Naive thymus-derived CD4-positive, alpha-beta T cell (primary cell): ENCODE measurements at regions of chr16 and their contacts with region 1.

Region 1: DNA sequence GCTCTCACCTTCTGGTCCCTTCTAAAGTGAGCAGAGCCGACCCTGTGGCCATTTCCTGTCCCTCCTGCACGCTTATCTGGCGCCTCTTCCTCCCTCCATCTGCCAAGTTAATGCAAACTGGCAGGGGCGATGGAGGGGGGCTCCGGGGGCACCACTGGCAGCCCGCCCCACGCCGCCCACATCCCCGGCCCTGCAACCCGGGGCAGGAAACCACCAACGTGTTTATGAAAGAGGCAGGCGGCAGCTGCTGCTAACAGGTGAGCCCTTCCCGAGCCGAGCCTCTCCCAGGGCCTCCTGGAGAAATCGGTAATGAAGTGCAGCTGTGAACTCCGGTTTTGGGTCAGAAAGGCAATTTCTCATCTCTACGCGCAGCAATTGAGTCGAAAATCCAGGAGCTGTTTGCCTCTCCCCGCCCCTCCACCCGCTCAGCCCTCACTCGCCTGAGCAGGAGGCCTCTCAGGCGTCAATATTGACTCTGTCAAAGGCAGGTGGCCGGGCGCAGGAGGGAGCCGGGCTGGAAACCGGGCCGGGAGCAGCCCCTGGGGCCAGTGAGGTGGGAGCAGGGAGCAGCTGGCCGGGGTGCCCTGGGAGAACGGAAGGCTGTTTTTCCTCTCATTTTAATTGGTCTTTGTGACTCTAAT is 164.4 kb upstream of the GSE1 start:
- DNase-seq: peak in 8 of 9 donors; percentile 36 to 76 (median 72)
- ATAC-seq: peak; percentile 82
- H3K4me3 ChIP-seq: peak overlapping the region; percentile 24
- H3K4me3 Mint-ChIP-seq: peak overlapping the region in 9 of 10 donors; percentile 60 to 82 (median 73)
- H3K27ac ChIP-seq: peak overlapping the region; percentile 58
- H3K27ac Mint-ChIP-seq: peak overlapping the region in 8 of 9 donors; percentile 83 to 97 (median 91)
- H3K4me1 ChIP-seq: peaks cover 31 to 57% of the 10 kb centered on the region in 2 donors
- H3K4me1 Mint-ChIP-seq: peaks cover 3 to 73% (median 48%) of the 10 kb centered on the region in 7 donors
- H3K27me3 ChIP-seq: no peaks in the 10 kb centered on the region
- H3K27me3 Mint-ChIP-seq: peaks cover 0 to 2% (median 0%) of the 10 kb centered on the region in 5 donors

Region 2: DNA sequence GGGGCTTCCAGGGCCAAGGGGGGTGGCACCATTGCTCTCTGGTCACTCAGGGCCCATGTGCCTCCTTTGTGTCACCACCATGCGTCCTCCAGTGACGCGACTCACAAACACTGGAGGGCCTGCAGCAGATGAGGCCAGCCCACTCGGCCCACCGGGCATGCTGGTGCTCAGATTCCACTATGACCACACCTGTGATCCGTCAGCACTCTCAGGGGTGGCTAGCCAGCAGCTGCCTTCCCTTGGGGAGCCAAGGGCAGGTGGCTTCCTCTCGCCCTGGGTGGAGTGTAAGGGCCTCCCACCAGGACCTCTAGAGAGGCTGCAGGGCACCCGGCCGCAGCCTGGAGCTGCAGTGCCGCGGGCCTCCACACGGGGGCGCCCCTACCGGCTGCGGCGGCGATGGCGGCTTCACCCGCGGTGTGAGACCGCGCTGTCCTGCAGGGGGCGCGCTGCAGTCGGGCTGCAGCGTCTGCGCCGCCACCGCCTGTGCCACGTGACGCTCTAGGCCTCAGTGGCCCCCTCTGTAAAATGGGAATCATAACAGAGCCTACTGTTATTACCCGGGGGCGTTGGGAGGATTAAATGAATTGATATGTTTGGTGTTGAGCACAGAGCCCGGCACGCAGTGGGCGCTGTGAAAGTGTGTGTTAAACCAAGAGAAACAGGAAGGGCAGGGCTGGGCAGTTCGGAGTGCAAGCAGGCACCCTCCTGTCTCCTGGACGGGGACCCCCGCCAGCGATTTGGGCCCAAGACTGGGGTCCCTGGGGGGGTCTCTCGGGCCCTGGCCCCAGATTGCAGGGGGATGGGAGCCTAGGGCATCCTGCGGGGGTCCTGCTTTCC is 28.0 kb before region 1 on chr16:
- CTCF ChIA-PET with region 1: interaction called, 11 read pairs
- POLR2A ChIA-PET with region 1: interaction called, 3 read pairs
- intact Hi-C with region 1: loop called in 1 of 2 experiments (anchors 1 kb)
- DNase-seq: peak; percentile 29 to 90 (median 71)
- ATAC-seq: peak; percentile 95
- H3K4me3 ChIP-seq: no peak overlapping the region
- H3K4me3 Mint-ChIP-seq: no peak overlapping the region
- H3K27ac ChIP-seq: no peak overlapping the region
- H3K27ac Mint-ChIP-seq: no peak overlapping the region
- H3K4me1 ChIP-seq: peaks cover 0 to 10% of the 10 kb centered on the region in 2 donors
- H3K4me1 Mint-ChIP-seq: peaks cover 0 to 10% (median 0%) of the 10 kb centered on the region in 7 donors
- H3K27me3 ChIP-seq: no peaks in the 10 kb centered on the region
- H3K27me3 Mint-ChIP-seq: peaks cover 0 to 4% (median 0%) of the 10 kb centered on the region in 5 donors

Region 3: GRCh38 chr16:85461814-85462713 is 13.4 kb after region 1 on chr16:
- CTCF ChIA-PET with region 1: interaction called, 4 read pairs
- POLR2A ChIA-PET with region 1: interaction called, 29 read pairs
- intact Hi-C with region 1: loop called in 1 of 2 experiments (anchors 1 kb)
- DNase-seq: no peak
- ATAC-seq: peak; percentile 65
- H3K4me3 ChIP-seq: peak overlapping the region; percentile 50
- H3K4me3 Mint-ChIP-seq: peak overlapping the region; percentile 47 to 93 (median 87)
- H3K27ac ChIP-seq: no peak overlapping the region
- H3K27ac Mint-ChIP-seq: peak overlapping the region in 1 of 9 donors; percentile 58
- H3K4me1 ChIP-seq: peaks cover 0 to 11% of the 10 kb centered on the region in 2 donors
- H3K4me1 Mint-ChIP-seq: peaks cover 3 to 15% (median 9%) of the 10 kb centered on the region in 7 donors
- H3K27me3 ChIP-seq: peaks cover 0 to 3% of the 10 kb centered on the region in 2 donors
- H3K27me3 Mint-ChIP-seq: peaks cover 14 to 41% (median 19%) of the 10 kb centered on the region in 5 donors

Region 4: DNA sequence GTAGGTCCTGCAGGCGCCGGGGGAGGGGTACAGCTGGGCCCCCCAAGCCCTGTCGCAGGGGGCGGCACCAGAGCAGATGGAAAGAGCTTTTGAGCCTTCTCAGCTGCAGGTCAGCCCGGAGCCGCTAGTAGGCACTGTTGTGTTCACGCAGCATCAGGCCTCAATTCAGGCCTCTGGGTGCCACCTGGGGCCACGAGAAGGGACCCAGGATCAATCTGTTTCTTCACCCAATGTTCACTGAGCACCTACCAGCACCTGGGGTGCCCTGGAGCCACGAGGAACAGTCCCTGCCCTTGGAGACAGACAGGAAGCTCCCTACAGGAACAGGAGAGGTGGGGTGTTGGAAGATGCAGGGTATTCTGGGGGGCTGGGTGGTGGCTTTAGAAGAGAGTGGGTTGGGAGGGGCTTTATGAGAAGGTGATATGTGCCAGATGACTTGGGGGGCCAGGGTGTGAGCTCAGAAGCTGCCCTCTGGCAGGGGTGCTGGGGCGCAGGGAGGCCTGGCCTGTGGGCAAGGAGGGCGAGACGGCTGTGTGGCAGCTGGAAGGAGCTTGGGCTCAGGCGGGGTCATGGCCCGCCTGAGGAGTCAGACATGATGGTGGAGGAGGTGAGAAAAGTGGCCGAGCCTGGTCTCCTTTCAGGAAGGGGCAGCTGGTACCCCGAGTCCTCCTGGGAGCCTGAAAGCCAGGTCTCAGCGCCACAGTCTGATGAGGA is 42.5 kb after region 1 on chr16:
- CTCF ChIA-PET with region 1: interaction called, 4 read pairs
- POLR2A ChIA-PET with region 1: interaction called, 3 read pairs
- intact Hi-C with region 1: loop called in 1 of 2 experiments (anchors 5 kb)
- DNase-seq: peak in 3 of 9 donors; percentile 17 to 28 (median 27)
- ATAC-seq: peak; percentile 69
- H3K4me3 ChIP-seq: no peak overlapping the region
- H3K4me3 Mint-ChIP-seq: peak overlapping the region in 1 of 10 donors; percentile 52
- H3K27ac ChIP-seq: no peak overlapping the region
- H3K27ac Mint-ChIP-seq: peak overlapping the region in 1 of 9 donors; percentile 46
- H3K4me1 ChIP-seq: no peaks in the 10 kb centered on the region
- H3K4me1 Mint-ChIP-seq: peaks cover 4 to 16% (median 8%) of the 10 kb centered on the region in 7 donors
- H3K27me3 ChIP-seq: no peaks in the 10 kb centered on the region
- H3K27me3 Mint-ChIP-seq: no peaks in the 10 kb centered on the region

Region 5: GRCh38 chr16:85503679-85504231 is 55.1 kb after region 1 on chr16:
- CTCF ChIA-PET with region 1: no interaction called
- POLR2A ChIA-PET with region 1: no interaction called
- intact Hi-C with region 1: no loop called
- DNase-seq: no peak
- ATAC-seq: no peak
- H3K4me3 ChIP-seq: no peak overlapping the region
- H3K4me3 Mint-ChIP-seq: no peak overlapping the region
- H3K27ac ChIP-seq: no peak overlapping the region
- H3K27ac Mint-ChIP-seq: no peak overlapping the region
- H3K4me1 ChIP-seq: no peaks in the 10 kb centered on the region
- H3K4me1 Mint-ChIP-seq: no peaks in the 10 kb centered on the region
- H3K27me3 ChIP-seq: no peaks in the 10 kb centered on the region
- H3K27me3 Mint-ChIP-seq: no peaks in the 10 kb centered on the region